ENCODE measurements at regions of chr5 and their contacts with region 1.

Region 1: DNA sequence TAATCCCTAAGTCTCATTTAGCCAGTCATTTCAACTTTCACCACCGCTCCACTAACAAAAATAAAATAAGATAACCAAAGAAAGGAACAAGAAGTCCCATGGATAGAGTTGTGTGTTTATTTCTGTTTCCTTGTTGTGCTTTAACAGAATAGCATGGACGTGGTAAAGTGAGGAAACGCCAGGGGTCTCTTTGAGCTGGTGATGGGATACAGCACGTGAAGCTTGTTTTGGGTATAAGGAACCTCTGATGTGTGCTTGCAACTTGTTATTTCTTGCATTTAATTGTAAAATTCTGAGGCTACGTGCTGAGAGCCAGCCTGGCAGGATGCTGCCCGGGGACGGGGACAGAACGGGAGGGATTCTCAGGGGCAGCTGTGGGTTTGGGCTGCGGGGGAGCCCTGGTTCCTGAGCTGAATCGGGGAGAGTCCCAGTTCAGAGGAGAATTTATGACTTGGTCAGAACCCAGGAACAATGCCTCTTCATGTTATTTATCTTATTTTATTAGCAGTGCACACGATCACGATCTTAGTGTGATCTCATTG is 63.4 kb downstream of the ANKRD33B start:
- DNase-seq: peak; percentile 38
- ATAC-seq: no peak
- H3K4me3 Mint-ChIP-seq: peak overlapping the region; percentile 63
- H3K27ac Mint-ChIP-seq: peak overlapping the region; percentile 48
- H3K4me1 Mint-ChIP-seq: peaks cover 32% of the 10 kb centered on the region
- H3K27me3 Mint-ChIP-seq: peaks cover 13% of the 10 kb centered on the region

Region 2: GRCh38 chr5:10441083-10441991 is 185.9 kb before region 1 on chr5 and contains the start of gene ROPN1L:
- CTCF ChIA-PET with region 1: interaction called, 8 read pairs
- POLR2A ChIA-PET with region 1: no interaction called
- intact Hi-C with region 1: loop called in 1 of 2 experiments (anchors 1 kb)
- DNase-seq: peak; percentile 87
- ATAC-seq: peak; percentile 98
- H3K4me3 Mint-ChIP-seq: peak within 1 kb of the TSS; percentile 72
- H3K27ac Mint-ChIP-seq: no peak within 1 kb of the TSS
- H3K4me1 Mint-ChIP-seq: peaks cover 31% of the 10 kb centered on the region
- H3K27me3 Mint-ChIP-seq: peaks cover 3% of the 10 kb centered on the region
- total RNA-seq, gene ROPN1L: 0.28 TPM in 1 of 2 experiments, not detected in the other

Region 3: GRCh38 chr5:10452768-10453331 is 174.4 kb before region 1 on chr5:
- CTCF ChIA-PET with region 1: interaction called, 46 read pairs
- POLR2A ChIA-PET with region 1: no interaction called
- intact Hi-C with region 1: loop called (anchors 1 kb)
- DNase-seq: no peak
- ATAC-seq: peak; percentile 84
- H3K4me3 Mint-ChIP-seq: no peak overlapping the region
- H3K27ac Mint-ChIP-seq: no peak overlapping the region
- H3K4me1 Mint-ChIP-seq: peaks cover 3% of the 10 kb centered on the region
- H3K27me3 Mint-ChIP-seq: no peaks in the 10 kb centered on the region

Region 4: DNA sequence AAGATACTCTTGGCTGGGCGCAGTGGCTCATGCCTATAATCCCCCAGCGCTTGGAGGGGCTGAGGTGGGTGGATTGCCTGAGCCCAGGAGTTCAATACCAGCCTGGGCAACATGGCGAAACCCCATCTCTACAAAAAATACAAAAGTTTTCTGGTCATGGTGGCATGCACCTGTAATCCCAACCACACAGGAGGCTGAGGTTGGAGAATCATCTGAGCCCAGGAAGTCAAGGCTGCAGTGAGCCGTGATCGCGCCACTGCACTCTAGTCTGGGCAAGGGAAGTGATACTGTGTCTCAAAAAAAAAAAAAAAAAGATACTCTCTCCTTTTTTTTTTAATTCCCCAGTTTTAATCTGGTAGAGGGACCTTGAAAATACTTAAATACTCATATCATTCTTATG is 48.4 kb before region 1 on chr5:
- CTCF ChIA-PET with region 1: interaction called, 7 read pairs
- POLR2A ChIA-PET with region 1: no interaction called
- intact Hi-C with region 1: loop called in 1 of 2 experiments (anchors 1 kb)
- DNase-seq: peak; percentile 49
- ATAC-seq: no peak
- H3K4me3 Mint-ChIP-seq: no peak overlapping the region
- H3K27ac Mint-ChIP-seq: no peak overlapping the region
- H3K4me1 Mint-ChIP-seq: peaks cover 47% of the 10 kb centered on the region
- H3K27me3 Mint-ChIP-seq: peaks cover 6% of the 10 kb centered on the region

Region 5: DNA sequence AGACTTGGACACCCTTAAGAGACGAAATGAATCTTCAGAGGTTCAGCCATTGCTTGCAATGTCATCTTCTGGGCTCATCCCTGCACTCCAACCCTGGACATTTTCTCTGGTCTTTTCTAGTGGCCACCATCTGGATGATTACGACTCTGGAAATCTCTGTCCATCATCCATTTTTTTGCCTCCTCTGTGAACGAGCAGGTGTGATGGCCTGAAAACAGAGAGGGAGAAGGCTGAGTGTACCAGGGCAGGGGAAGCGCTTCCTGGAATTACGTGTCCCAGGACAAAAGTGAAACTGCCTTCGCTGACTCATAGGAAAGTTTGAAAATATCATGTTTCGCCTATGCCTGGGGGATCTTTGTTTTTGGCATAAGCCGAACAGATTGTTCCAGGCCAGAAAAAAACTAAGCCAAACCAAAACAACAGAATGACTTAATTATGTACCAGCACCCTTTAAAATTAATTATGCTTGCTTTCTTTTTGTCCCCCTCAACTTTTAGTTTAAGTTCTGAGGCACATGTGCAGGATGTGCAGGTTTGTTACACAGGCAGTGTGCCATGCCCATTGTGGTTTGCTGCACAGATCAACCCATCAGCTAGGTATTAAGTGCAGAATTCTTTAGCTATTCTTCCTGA is 31.4 kb before region 1 on chr5:
- CTCF ChIA-PET with region 1: interaction called, 13 read pairs
- POLR2A ChIA-PET with region 1: no interaction called
- intact Hi-C with region 1: loop called (anchors 1 to 5 kb)
- DNase-seq: peak; percentile 71
- ATAC-seq: peak; percentile 87
- H3K4me3 Mint-ChIP-seq: no peak overlapping the region
- H3K27ac Mint-ChIP-seq: no peak overlapping the region
- H3K4me1 Mint-ChIP-seq: peaks cover 40% of the 10 kb centered on the region
- H3K27me3 Mint-ChIP-seq: peaks cover 14% of the 10 kb centered on the region

Region 6: DNA sequence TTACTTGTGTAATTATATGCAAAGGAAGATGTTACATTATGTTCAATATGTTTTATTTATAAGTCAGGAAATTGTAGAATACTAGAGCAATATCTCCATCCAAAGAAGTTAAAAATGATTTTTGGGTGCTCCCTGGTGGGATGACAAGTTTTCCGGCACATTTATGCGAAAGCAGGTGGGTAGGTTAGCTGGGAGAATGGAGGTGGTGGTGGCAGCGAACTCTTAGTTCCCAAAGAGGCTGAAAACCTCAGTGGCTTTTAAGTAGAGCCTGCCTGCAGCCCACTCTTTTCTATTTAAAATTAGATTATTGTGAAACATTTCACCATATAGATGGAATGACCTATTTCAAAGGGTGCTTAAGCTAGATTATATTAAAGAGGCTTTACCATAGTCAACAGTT is 11.5 kb before region 1 on chr5:
- CTCF ChIA-PET with region 1: interaction called, 12 read pairs
- POLR2A ChIA-PET with region 1: no interaction called
- intact Hi-C with region 1: no loop called
- DNase-seq: no peak
- ATAC-seq: no peak
- H3K4me3 Mint-ChIP-seq: no peak overlapping the region
- H3K27ac Mint-ChIP-seq: no peak overlapping the region
- H3K4me1 Mint-ChIP-seq: peaks cover 2% of the 10 kb centered on the region
- H3K27me3 Mint-ChIP-seq: no peaks in the 10 kb centered on the region

Region 7: DNA sequence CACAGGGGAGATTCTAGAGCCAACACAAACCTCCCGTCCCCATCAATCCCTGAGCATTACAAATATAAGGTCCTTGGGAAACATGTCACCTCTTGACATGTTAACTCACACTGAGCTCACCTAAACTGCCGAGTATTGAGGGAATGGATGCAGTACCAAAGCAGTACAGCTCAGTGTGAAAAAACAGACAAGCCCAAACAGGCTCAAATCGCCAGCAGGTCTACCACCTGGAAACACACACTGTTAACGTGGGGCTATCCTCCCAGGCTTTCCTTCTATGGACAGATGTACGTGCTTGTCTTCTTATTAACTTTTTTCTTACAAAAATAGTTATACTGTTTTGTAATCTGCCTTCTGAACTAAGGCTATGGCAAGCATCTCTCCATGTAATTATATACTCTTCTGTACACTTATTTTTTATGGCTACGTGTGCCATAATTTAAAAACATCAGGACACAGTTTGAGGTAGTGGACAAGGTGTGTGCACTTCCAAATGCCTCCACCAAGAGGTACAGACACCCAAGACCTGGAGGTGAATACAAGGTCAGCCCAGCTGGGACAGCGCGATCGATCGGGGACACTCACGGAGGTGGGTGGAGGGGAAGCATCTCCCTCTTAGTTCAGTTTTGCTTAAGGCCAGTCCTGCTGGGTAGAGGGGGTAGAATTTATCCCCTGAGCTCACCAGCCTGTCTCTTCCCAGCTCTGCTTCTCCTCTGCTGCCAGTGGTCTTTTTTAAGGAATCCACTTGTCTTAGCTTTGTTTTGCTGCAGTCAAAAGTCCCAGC is 57.3 kb after region 1 on chr5:
- CTCF ChIA-PET with region 1: interaction called, 10 read pairs
- POLR2A ChIA-PET with region 1: no interaction called
- intact Hi-C with region 1: loop called in 1 of 2 experiments (anchors 2 kb)
- DNase-seq: no peak
- ATAC-seq: peak; percentile 42
- H3K4me3 Mint-ChIP-seq: no peak overlapping the region
- H3K27ac Mint-ChIP-seq: peak overlapping the region; percentile 30
- H3K4me1 Mint-ChIP-seq: peaks cover 5% of the 10 kb centered on the region
- H3K27me3 Mint-ChIP-seq: no peaks in the 10 kb centered on the region

Region 8: GRCh38 chr5:10808347-10809226 is 181.4 kb after region 1 on chr5:
- CTCF ChIA-PET with region 1: no interaction called
- POLR2A ChIA-PET with region 1: no interaction called
- intact Hi-C with region 1: no loop called
- DNase-seq: no peak
- ATAC-seq: no peak
- H3K4me3 Mint-ChIP-seq: no peak overlapping the region
- H3K27ac Mint-ChIP-seq: no peak overlapping the region
- H3K4me1 Mint-ChIP-seq: no peaks in the 10 kb centered on the region
- H3K27me3 Mint-ChIP-seq: peaks cover 14% of the 10 kb centered on the region

Region 9: DNA sequence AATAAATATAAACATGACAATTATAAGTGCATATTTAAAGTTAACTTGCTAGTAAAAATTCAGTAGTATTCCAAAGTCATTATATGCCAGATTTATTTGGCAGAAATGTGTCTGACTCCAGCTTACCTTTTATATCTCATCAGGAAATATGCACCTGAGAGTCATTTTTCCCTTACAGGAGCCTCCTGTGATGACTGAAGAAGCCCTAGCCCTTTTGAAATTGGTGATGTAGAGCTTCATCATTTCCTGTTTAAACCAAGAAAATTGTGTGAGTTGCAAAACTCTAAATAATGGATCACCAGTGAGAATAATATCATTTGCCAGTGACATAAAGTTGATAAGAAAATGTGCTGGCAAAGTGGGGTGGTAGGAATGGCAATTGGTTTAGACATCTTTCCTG is 1319.1 kb after region 1 on chr5:
- CTCF ChIA-PET with region 1: no interaction called
- POLR2A ChIA-PET with region 1: no interaction called
- intact Hi-C with region 1: no loop called
- DNase-seq: no peak
- ATAC-seq: no peak
- H3K4me3 Mint-ChIP-seq: no peak overlapping the region
- H3K27ac Mint-ChIP-seq: no peak overlapping the region
- H3K4me1 Mint-ChIP-seq: no peaks in the 10 kb centered on the region
- H3K27me3 Mint-ChIP-seq: no peaks in the 10 kb centered on the region